Activated CD4-positive, alpha-beta T cell treated with anti-CD3 and anti-CD28 coated beads for 36 hours (primary cell): ENCODE measurements at regions of chr6 and their contacts with region 1.

Region 1: GRCh38 chr6:37137201-37138090 is 32.5 kb upstream of the PIM1 start:
- DNase-seq: peak; percentile 71
- ATAC-seq: peak; percentile 82
- H3K4me3 Mint-ChIP-seq: peak overlapping the region; percentile 43
- H3K27ac Mint-ChIP-seq: peak overlapping the region; percentile 94
- H3K4me1 Mint-ChIP-seq: peaks cover 46% of the 10 kb centered on the region
- H3K27me3 Mint-ChIP-seq: no peaks in the 10 kb centered on the region

Region 2: DNA sequence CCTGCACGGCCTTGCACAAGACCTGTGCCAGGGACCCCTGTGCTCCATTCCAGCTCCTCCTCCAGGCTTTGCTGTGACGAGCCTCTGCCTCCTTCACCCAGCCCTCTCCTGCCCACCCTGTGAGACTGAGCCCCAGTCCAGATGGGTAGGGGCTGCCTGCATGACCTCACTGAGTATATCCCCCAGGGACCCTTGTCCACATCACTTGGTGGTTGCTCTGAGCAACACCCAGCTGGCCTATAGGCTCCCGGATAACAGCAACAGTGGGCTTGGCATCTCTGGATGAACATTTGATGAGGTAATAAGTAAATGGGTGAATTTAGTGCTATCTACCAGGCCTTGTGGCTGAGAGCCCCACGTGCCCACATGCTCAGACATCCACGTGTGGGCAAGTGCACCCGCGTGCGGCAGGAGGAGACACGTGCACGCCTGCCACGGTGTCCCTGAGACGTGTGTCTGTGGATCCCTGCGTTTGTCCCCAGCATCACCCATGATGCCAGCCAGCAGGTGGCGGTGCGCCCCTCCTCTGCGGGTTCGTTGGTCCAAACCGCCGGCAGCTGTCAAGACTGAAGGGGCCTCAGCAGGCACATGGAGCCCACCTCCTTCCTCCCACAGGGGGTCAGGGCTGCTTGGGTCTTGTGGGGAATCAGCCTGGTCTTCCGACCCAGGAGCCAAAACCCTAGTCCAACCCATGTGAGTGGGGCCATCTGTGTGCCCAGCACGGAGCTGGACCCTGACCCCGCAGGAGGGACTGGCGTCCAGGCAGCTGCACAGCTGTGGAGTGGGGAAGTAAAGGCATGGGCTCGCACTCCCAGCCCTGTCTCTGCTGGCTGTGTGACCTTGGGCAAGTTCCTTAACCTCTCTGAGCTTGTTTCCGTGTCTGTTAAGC is 86.1 kb before region 1 on chr6:
- CTCF ChIA-PET with region 1: interaction called, 4 read pairs
- POLR2A ChIA-PET with region 1: interaction called, 10 read pairs
- intact Hi-C with region 1: no loop called
- DNase-seq: peak; percentile 95
- ATAC-seq: peak; percentile 43
- H3K4me3 Mint-ChIP-seq: peak overlapping the region; percentile 79
- H3K27ac Mint-ChIP-seq: peak overlapping the region; percentile 100
- H3K4me1 Mint-ChIP-seq: peaks cover 55% of the 10 kb centered on the region
- H3K27me3 Mint-ChIP-seq: no peaks in the 10 kb centered on the region

Region 3: GRCh38 chr6:37102279-37103168 is 34.9 kb before region 1 on chr6:
- CTCF ChIA-PET with region 1: interaction called, 5 read pairs
- POLR2A ChIA-PET with region 1: no interaction called
- intact Hi-C with region 1: loop called in 1 of 2 experiments (anchors 2 kb)
- DNase-seq: peak; percentile 86
- ATAC-seq: peak; percentile 89
- H3K4me3 Mint-ChIP-seq: peak overlapping the region; percentile 60
- H3K27ac Mint-ChIP-seq: peak overlapping the region; percentile 86
- H3K4me1 Mint-ChIP-seq: peaks cover 28% of the 10 kb centered on the region
- H3K27me3 Mint-ChIP-seq: no peaks in the 10 kb centered on the region

Region 4: DNA sequence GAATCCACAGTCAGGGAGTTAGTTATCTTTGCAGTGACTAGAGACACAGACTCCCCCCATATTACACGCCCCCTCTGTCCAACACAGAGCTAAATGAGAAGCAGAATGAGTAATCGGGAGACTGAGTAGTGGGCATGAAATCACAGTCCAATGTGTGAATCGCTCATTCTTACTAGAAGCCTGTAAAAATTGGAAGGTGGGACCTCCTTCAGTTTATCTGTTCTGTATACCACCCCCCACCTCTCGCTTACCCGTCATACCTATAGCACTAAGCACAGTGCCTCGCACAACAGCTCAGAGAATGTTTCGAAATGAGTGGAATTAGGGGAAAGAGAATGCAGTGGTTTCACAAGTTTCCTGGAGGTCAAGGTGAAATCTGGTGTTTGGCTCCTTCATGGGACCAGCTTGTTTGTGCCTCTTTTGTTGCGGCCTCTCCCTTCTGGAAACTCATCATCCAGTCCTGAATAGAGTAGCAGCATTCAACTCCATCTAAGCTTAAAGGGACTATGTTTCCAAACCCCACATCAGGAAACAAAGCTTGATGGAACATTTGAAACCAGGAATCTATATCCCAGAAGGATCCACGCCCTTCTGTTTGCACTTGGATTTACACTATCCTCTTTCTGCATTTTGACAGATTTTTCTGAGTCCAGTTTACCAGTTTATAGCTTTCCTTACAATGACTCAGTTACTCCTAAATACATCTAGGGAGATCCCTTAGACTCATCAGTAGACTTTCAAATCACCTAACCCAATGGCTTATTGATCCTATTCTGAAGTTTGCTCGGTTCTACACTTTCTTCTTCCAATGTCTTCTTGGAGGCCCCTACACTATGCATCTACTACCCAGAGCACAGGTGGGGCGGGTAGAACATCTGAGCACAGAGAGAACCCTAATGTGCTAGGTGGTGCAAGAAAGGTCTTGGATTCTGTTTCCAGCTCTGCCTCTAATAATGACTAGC is 26.7 kb before region 1 on chr6:
- CTCF ChIA-PET with region 1: interaction called, 3 read pairs
- POLR2A ChIA-PET with region 1: no interaction called
- intact Hi-C with region 1: loop called (anchors 1 to 2 kb)
- DNase-seq: peak; percentile 68
- ATAC-seq: peak; percentile 92
- H3K4me3 Mint-ChIP-seq: no peak overlapping the region
- H3K27ac Mint-ChIP-seq: peak overlapping the region; percentile 76
- H3K4me1 Mint-ChIP-seq: peaks cover 22% of the 10 kb centered on the region
- H3K27me3 Mint-ChIP-seq: no peaks in the 10 kb centered on the region

Region 5: DNA sequence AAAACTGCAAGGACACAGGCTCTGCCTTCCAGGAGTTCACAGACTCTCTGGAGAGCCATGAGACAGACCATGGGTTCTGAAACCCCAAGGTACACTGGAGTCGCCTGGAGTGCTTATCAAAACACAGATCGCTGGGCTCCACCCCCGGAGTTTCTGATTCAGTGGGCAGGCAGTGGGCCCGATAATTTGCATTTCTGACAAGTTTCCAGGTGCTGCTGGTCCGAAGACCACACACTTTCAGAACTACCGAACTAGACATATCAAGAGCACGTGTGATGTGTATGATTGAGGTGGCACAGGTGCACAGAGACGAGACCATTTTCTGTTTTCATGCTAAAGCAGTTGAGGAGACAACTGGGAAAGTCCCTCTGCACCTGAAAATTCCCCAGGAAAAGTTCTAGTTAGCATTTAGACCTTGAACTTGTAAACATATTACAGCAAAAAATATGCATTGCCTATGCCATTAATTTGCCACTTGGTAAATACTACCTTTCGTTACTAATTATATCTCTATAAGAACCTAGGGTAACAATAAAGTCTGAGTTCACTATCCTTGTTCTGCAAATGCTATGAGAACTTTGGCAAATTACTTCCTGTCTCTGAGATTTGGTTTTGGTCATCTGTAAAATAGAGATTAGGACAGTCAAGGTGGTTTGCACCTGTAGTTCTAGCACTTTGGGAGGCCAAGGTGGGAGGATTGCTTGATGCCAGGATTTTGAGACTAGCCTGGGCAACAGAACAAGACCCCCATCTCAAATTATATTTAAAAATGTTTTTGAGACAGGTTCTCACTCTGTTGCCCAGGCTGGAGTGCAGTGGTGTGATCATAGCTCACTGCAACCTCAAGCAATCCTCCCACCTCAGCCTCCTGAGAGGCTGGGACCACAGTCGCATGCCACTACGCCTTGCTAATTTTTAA is 18.2 kb after region 1 on chr6:
- CTCF ChIA-PET with region 1: interaction called, 4 read pairs
- POLR2A ChIA-PET with region 1: interaction called, 7 read pairs
- intact Hi-C with region 1: loop called (anchors 1 to 2 kb)
- DNase-seq: peak; percentile 80
- ATAC-seq: peak; percentile 89
- H3K4me3 Mint-ChIP-seq: peak overlapping the region; percentile 27
- H3K27ac Mint-ChIP-seq: peak overlapping the region; percentile 53
- H3K4me1 Mint-ChIP-seq: peaks cover 31% of the 10 kb centered on the region
- H3K27me3 Mint-ChIP-seq: no peaks in the 10 kb centered on the region

Region 6: GRCh38 chr6:37182736-37183590 is 45.5 kb after region 1 on chr6:
- CTCF ChIA-PET with region 1: no interaction called
- POLR2A ChIA-PET with region 1: no interaction called
- intact Hi-C with region 1: no loop called
- DNase-seq: peak; percentile 77
- ATAC-seq: peak; percentile 91
- H3K4me3 Mint-ChIP-seq: peak overlapping the region; percentile 26
- H3K27ac Mint-ChIP-seq: peak overlapping the region; percentile 97
- H3K4me1 Mint-ChIP-seq: peaks cover 44% of the 10 kb centered on the region
- H3K27me3 Mint-ChIP-seq: no peaks in the 10 kb centered on the region